ENCODE measurements at regions of chr7 and their contacts with region 1.

Region 1: GRCh38 chr7:40232242-40232893 is 97.6 kb downstream of the SUGCT start:
- DNase-seq: peak; percentile 21
- H3K4me3 ChIP-seq: no peak overlapping the region
- CTCF ChIP-seq: peak; percentile 60

Region 2: GRCh38 chr7:40199076-40199802 is 33.1 kb before region 1 on chr7:
- CTCF ChIA-PET with region 1: interaction called, 26 read pairs
- POLR2A ChIA-PET with region 1: no interaction called
- DNase-seq: peak; percentile 52
- H3K4me3 ChIP-seq: no peak overlapping the region
- CTCF ChIP-seq: peak; percentile 35

Region 3: DNA sequence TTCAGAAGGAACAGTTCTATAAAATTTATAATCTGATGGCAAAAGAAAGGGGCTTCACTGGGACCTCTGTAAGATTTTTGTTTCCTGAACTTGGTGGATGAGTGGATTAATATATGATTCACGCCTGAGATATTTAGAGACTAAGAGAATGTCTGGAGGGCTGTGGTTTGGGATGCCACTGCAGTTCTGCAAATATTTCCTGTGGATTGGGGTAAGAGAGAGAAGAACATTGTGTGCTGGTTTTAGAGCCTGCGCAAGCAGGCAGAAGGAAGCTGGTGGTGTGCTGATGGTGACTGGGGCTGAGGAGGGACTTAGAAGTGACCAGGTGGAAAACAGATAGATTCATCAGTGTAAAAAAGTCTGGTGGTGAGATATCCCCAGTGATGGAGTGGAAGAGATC is 10.5 kb before region 1 on chr7:
- CTCF ChIA-PET with region 1: interaction called, 19 read pairs
- POLR2A ChIA-PET with region 1: interaction called, 4 read pairs
- DNase-seq: peak; percentile 93
- H3K4me3 ChIP-seq: no peak overlapping the region
- CTCF ChIP-seq: no peak

Region 4: GRCh38 chr7:40329601-40330153 is 97.3 kb after region 1 on chr7:
- CTCF ChIA-PET with region 1: interaction called, 26 read pairs
- POLR2A ChIA-PET with region 1: no interaction called
- DNase-seq: no peak
- H3K4me3 ChIP-seq: no peak overlapping the region
- CTCF ChIP-seq: peak; percentile 43

Region 5: DNA sequence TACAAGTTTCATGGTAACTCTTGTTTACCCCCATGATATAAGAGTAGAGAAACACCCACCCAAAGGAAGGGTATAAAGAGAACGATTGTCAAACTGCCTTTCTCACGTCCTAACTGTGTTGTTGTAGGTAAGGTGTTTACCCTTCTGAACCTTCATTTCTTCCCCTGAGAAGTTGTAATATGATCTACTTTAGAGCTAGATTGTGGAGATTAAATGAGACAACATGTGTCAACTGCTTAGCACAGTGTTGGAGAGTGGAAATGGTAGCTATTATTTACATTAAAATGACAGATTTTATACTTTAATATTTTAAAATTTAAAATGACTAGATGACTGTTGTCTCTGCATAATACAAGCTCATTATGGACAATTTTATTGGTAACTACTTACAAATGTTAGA is 127.2 kb after region 1 on chr7:
- CTCF ChIA-PET with region 1: no interaction called
- POLR2A ChIA-PET with region 1: no interaction called
- DNase-seq: no peak
- H3K4me3 ChIP-seq: no peak overlapping the region
- CTCF ChIP-seq: no peak

Region 6: GRCh38 chr7:40463446-40463845 is 231.1 kb after region 1 on chr7:
- CTCF ChIA-PET with region 1: no interaction called
- POLR2A ChIA-PET with region 1: no interaction called
- DNase-seq: no peak
- H3K4me3 ChIP-seq: no peak overlapping the region
- CTCF ChIP-seq: no peak

Region 7: GRCh38 chr7:41705109-41705901 is 1472.9 kb after region 1 on chr7:
- CTCF ChIA-PET with region 1: interaction called, 22 read pairs
- POLR2A ChIA-PET with region 1: no interaction called
- DNase-seq: peak; percentile 68
- H3K4me3 ChIP-seq: peak overlapping the region; percentile 69
- CTCF ChIP-seq: peak; percentile 94

Measured in AG04449 (cell line).